ENCODE measurements at regions of chr18 and their contacts with region 1.

Region 1: GRCh38 chr18:20971886-20972267 is 139.7 kb downstream of the ROCK1 start:
- DNase-seq: peak in 4 of 9 donors; percentile 4 to 26 (median 12)
- ATAC-seq: peak; percentile 61
- H3K4me3 ChIP-seq: no peak overlapping the region
- H3K4me3 Mint-ChIP-seq: no peak overlapping the region
- H3K27ac ChIP-seq: no peak overlapping the region
- H3K27ac Mint-ChIP-seq: peak overlapping the region in 6 of 9 donors; percentile 2 to 23 (median 9)
- H3K4me1 ChIP-seq: no peaks in the 10 kb centered on the region
- H3K4me1 Mint-ChIP-seq: peaks cover 0 to 11% (median 4%) of the 10 kb centered on the region in 7 donors
- H3K27me3 ChIP-seq: no peaks in the 10 kb centered on the region
- H3K27me3 Mint-ChIP-seq: no peaks in the 10 kb centered on the region

Region 2: DNA sequence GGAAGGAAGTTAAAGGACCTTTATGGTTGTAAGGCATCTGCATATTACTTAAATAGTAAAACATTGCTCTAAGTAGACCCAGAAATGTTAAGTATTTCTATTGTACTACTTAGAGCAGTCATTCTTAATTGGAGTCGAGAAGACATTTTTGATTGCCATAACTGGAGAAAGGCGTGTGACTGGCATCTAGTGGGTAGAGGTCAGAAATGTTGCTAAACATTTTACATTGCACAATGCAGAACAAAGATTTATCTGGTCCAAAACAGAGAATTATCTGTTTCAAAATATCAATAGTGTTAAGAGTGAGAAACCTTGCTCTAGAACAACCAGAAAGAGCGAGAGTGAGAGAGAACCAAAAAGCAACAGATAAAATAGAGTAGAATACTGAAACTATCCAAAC is 163.0 kb after region 1 on chr18:
- CTCF ChIA-PET with region 1: no interaction called
- POLR2A ChIA-PET with region 1: interaction called, 3 read pairs
- intact Hi-C with region 1: loop called (anchors 1 kb)
- DNase-seq: peak in 7 of 9 donors; percentile 17 to 56 (median 27)
- ATAC-seq: peak; percentile 52
- H3K4me3 ChIP-seq: no peak overlapping the region
- H3K4me3 Mint-ChIP-seq: no peak overlapping the region
- H3K27ac ChIP-seq: no peak overlapping the region
- H3K27ac Mint-ChIP-seq: no peak overlapping the region
- H3K4me1 ChIP-seq: no peaks in the 10 kb centered on the region
- H3K4me1 Mint-ChIP-seq: peaks cover 0 to 4% (median 0%) of the 10 kb centered on the region in 7 donors
- H3K27me3 ChIP-seq: no peaks in the 10 kb centered on the region
- H3K27me3 Mint-ChIP-seq: peaks cover 0 to 2% (median 0%) of the 10 kb centered on the region in 5 donors

Region 3: DNA sequence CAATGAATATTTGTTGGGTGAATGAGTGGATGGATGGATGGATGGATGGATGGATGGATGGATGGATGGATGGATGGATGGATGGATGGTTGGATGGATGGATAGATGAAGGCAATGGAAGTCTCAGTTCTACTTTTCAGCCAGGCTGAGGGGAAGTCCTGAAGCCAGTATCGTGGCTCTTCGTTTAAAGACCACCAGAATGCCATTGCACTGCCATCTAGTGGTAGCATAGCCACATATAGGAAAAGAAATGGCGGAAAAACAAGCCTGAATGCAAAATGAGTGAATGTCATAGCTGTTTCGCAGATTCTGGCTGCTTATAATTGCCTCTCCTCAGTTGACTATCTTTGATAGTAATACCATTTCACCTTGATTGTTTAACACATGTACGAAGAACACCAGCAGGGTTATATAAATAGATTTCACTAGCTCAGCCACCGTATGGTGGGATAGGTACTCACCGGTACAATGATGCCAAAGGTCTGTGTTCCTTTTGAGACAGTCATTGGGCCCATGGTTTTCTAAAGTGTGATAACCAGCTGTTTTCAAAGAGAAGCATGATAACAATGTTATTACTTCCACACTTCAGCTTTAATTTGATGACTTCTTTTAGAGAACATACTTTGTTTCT is 207.8 kb after region 1 on chr18:
- CTCF ChIA-PET with region 1: no interaction called
- POLR2A ChIA-PET with region 1: no interaction called
- intact Hi-C with region 1: loop called (anchors 5 kb)
- DNase-seq: peak in 6 of 9 donors; percentile 4 to 49 (median 18)
- ATAC-seq: peak; percentile 82
- H3K4me3 ChIP-seq: no peak overlapping the region
- H3K4me3 Mint-ChIP-seq: no peak overlapping the region
- H3K27ac ChIP-seq: no peak overlapping the region
- H3K27ac Mint-ChIP-seq: no peak overlapping the region
- H3K4me1 ChIP-seq: no peaks in the 10 kb centered on the region
- H3K4me1 Mint-ChIP-seq: peaks cover 0 to 10% (median 7%) of the 10 kb centered on the region in 7 donors
- H3K27me3 ChIP-seq: no peaks in the 10 kb centered on the region
- H3K27me3 Mint-ChIP-seq: peaks cover 0 to 2% (median 0%) of the 10 kb centered on the region in 5 donors